Calu3 (cell line): ENCODE measurements at regions of chr15 and their contacts with region 1.

Region 1: DNA sequence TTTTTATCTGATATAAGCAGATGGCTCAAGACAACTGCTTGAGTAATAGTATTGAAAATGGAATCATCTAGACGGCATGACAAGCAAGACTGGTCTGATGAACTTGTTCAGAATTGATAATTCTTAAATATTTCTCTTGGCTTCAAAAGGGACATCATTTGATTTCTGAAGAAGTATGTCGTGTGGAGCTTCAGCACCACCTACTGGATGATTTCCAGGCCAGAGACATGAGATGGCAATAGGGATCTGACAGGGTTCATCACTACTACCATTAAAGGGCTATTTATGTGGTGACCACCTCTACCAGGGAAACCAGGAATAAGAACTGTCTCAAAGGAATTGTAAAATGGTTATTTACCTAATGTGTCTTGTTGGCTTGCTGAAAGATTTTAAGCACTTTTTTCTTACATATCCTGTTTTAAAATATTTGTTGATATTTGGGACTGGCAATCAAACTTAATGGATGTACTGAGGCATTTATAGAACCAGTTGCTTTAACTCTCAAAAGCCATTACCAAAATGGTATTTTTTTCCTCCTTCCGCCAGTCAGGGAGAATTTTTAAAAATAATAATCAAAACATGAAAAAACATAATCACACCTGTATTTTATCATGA is 99.5 kb upstream of the FAM98B start:
- DNase-seq: peak; percentile 45
- H3K4me3 Mint-ChIP-seq: no peak overlapping the region
- H3K27ac Mint-ChIP-seq: no peak overlapping the region
- H3K4me1 Mint-ChIP-seq: no peaks in the 10 kb centered on the region
- H3K27me3 Mint-ChIP-seq: no peaks in the 10 kb centered on the region
- CTCF ChIP-seq: no peak

Region 2: GRCh38 chr15:38252481-38253412 is 101.7 kb before region 1 on chr15 and contains the start of gene SPRED1:
- CTCF ChIA-PET with region 1: no interaction called
- intact Hi-C with region 1: loop called (anchors 5 kb)
- DNase-seq: peak; percentile 54
- H3K4me3 Mint-ChIP-seq: peak within 1 kb of the TSS; percentile 78
- H3K27ac Mint-ChIP-seq: peak within 1 kb of the TSS; percentile 91
- H3K4me1 Mint-ChIP-seq: no peaks in the 10 kb centered on the region
- H3K27me3 Mint-ChIP-seq: no peaks in the 10 kb centered on the region
- CTCF ChIP-seq: no peak
- total RNA-seq, gene SPRED1: 16.1 and 16.4 TPM in 2 replicates

Region 3: DNA sequence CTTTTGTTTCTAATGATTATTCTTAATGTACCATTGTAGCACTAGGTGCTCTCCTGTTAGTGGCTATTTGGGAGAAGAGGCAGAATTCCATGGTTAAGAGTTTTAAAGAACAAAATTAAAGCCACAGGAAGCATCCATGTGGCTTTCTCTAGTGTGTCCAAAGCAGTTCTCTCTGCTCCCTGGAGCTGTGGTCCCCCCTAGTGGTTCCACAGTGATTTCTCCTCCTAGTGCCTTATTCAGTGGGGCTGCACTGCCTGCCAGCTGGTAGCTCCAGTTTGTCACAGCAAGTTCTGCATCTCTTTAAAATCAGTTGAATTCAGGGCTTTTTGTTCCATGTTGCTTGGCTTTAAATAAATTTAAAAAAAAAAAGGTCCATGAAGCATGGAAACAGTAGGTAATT is 59.9 kb after region 1 on chr15:
- CTCF ChIA-PET with region 1: no interaction called
- intact Hi-C with region 1: loop called (anchors 10 kb)
- DNase-seq: peak; percentile 55
- H3K4me3 Mint-ChIP-seq: no peak overlapping the region
- H3K27ac Mint-ChIP-seq: no peak overlapping the region
- H3K4me1 Mint-ChIP-seq: no peaks in the 10 kb centered on the region
- H3K27me3 Mint-ChIP-seq: peaks cover 30% of the 10 kb centered on the region
- CTCF ChIP-seq: no peak